ENCODE measurements at regions of chr20 and their contacts with region 1.

Region 1: DNA sequence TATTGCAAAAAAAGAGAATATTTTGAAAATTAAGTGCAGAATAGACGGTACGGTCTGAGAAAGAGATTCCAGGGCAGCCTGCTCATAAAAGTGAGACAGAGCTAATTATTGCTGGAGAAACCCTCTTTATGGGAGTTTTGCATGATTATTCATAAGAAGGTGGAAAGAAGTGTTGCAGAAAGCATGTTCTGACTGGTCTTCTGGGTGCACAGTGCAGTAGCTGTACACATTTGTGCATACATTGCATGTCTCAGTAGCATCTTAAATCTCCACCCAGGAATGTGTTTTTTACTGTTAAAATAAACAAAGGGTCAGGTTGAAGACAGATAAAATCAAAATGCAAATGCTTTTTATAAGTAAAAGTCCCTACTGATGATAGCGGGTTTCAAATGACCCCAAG is 1813.6 kb upstream of the DEFB115 start:
- DNase-seq: no peak
- H3K4me3 ChIP-seq: no peak overlapping the region
- H3K4me3 Mint-ChIP-seq: peak overlapping the region in 2 of 8 donors; percentile 22 to 77
- H3K27ac ChIP-seq: no peak overlapping the region
- H3K27ac Mint-ChIP-seq: no peak overlapping the region
- H3K4me1 ChIP-seq: peaks cover 5% of the 10 kb centered on the region
- H3K4me1 Mint-ChIP-seq: peaks cover 0 to 3% (median 0%) of the 10 kb centered on the region in 4 donors
- H3K27me3 ChIP-seq: no peaks in the 10 kb centered on the region
- H3K27me3 Mint-ChIP-seq: no peaks in the 10 kb centered on the region

Region 2: GRCh38 chr20:31322504-31322903 is 1878.7 kb after region 1 on chr20:
- CTCF ChIA-PET with region 1: no interaction called
- POLR2A ChIA-PET with region 1: no interaction called
- intact Hi-C with region 1: loop called (anchors 10 kb)
- DNase-seq: no peak
- H3K4me3 ChIP-seq: no peak overlapping the region
- H3K4me3 Mint-ChIP-seq: no peak overlapping the region
- H3K27ac ChIP-seq: no peak overlapping the region
- H3K27ac Mint-ChIP-seq: no peak overlapping the region
- H3K4me1 ChIP-seq: no peaks in the 10 kb centered on the region
- H3K4me1 Mint-ChIP-seq: no peaks in the 10 kb centered on the region
- H3K27me3 ChIP-seq: no peaks in the 10 kb centered on the region
- H3K27me3 Mint-ChIP-seq: peaks cover 0 to 5% of the 10 kb centered on the region in 2 donors